Dendritic cell treated with granulocyte-macrophage colony-stimulating factor and Interleukin-4, amounts not matched to agents 40 ng/mL and 50 ng/mL, for 4 days (primary cell): ENCODE measurements at regions of chr12 and their contacts with region 1.

Region 1: GRCh38 chr12:15910864-15911721 is at the start of gene DERA:
- H3K4me3 Mint-ChIP-seq: peak within 1 kb of the TSS; percentile 84
- H3K27ac Mint-ChIP-seq: peak within 1 kb of the TSS; percentile 92
- H3K4me1 Mint-ChIP-seq: peaks cover 13% of the 10 kb centered on the region
- H3K27me3 Mint-ChIP-seq: no peaks in the 10 kb centered on the region

Region 2: DNA sequence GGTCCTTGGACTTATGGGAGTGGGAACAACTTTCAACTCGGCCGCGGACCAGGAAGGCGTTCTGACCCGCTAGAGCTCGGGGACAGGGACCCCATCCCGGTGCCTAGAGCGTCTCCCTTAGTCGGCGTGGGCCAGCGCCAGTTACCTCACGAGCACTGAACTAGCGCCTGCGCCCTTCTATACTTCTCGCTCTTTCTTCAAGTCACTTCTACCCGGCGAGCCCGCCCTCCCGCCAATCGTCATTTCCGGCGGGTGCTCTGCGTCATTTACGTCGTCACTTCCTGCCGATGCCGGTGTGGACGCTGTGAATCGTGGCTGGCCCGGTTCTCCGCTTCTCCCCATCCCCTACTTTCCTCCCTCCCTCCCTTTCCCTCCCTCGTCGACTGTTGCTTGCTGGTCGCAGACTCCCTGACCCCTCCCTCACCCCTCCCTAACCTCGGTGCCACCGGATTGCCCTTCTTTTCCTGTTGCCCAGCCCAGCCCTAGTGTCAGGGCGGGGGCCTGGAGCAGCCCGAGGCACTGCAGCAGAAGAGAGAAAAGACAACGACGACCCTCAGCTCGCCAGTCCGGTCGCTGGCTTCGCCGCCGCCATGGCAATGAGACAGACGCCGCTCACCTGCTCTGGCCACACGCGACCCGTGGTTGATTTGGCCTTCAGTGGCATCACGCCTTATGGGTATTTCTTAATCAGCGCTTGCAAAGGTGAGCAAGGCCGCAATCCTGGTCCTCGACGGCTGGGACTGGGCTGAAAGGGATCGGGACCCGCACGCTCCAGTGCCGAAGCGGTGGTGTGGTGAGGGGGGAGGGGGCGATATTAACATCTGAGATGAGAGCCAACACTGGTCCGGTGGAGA is 28.7 kb before region 1 on chr12 and contains the start of gene STRAP:
- intact Hi-C with region 1: loop called (anchors 1 kb)
- H3K4me3 Mint-ChIP-seq: peak within 1 kb of the TSS; percentile 86
- H3K27ac Mint-ChIP-seq: peak within 1 kb of the TSS; percentile 98
- H3K4me1 Mint-ChIP-seq: peaks cover 19% of the 10 kb centered on the region
- H3K27me3 Mint-ChIP-seq: no peaks in the 10 kb centered on the region